ENCODE measurements at regions of chr2 and their contacts with region 1.

Region 1: DNA sequence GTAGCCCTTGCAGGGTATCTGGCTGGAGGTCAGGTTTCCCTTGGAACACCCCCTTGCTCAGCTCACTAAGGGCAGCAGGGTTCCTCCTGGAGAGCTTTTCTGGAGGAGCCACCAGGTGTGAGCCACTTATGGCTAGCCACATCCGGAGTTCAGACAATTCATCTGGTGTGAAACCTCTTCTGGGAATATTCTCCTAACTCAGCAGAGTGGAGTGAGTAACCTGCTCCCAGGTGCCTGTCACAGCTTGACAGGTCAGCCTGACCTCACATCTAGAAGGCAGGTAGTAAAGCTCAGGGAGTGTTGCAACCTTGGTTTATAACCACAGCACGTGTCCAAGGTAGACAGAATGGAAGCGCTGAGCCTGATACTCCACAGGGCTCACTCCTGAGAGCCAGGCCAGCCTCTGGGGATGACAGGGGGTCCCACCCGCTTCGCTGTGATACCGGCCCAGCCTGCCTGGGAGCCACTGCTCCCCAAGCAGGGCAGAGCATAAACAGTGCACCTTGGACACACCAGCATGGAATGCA is 62.6 kb upstream of the TGFA start:
- DNase-seq: peak; percentile 34
- H3K4me3 ChIP-seq: no peak overlapping the region
- H3K27ac ChIP-seq: no peak overlapping the region
- H3K4me1 ChIP-seq: no peaks in the 10 kb centered on the region
- H3K27me3 ChIP-seq: no peaks in the 10 kb centered on the region
- CTCF ChIP-seq: no peak

Region 2: GRCh38 chr2:70340921-70341765 is 275.1 kb before region 1 on chr2:
- intact Hi-C with region 1: loop called (anchors 2 kb)
- DNase-seq: peak; percentile 46
- H3K4me3 ChIP-seq: no peak overlapping the region
- H3K27ac ChIP-seq: no peak overlapping the region
- H3K4me1 ChIP-seq: no peaks in the 10 kb centered on the region
- H3K27me3 ChIP-seq: no peaks in the 10 kb centered on the region
- CTCF ChIP-seq: peak; percentile 69